Ascending aorta (tissue), 2 donors: ENCODE measurements at regions of chr20 and their contacts with region 1.

Region 1: GRCh38 chr20:12394786-12395185 is 477.1 kb downstream of the BTBD3 start:
- DNase-seq: no peak
- H3K4me3 ChIP-seq: no peak overlapping the region
- H3K27ac ChIP-seq: no peak overlapping the region
- H3K4me1 ChIP-seq: no peaks in the 10 kb centered on the region
- H3K27me3 ChIP-seq: no peaks in the 10 kb centered on the region
- CTCF ChIP-seq: no peak

Region 2: GRCh38 chr20:12318043-12318442 is 76.7 kb before region 1 on chr20:
- intact Hi-C with region 1: no loop called
- DNase-seq: no peak
- H3K4me3 ChIP-seq: no peak overlapping the region
- H3K27ac ChIP-seq: no peak overlapping the region
- H3K4me1 ChIP-seq: no peaks in the 10 kb centered on the region
- H3K27me3 ChIP-seq: no peaks in the 10 kb centered on the region
- CTCF ChIP-seq: no peak

Region 3: DNA sequence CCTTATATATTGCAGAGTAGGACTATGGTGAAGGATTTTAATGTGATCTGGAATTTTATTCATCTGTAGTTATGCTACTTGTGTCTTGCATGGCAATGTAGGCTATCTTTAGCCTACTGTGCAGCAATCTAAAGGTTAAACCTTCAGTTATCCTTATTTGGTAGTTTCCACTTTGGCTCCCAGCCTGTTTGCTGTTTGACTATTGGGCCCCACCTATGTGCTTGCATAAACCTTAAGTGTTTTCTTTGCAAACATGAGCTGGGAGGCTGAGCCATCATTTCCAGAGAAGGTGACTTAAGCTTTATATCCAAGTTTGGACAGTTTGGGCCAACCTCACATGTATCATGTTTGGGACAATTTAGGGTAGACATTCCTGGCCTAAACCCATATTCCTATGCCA is 60.4 kb after region 1 on chr20:
- intact Hi-C with region 1: loop called (anchors 10 kb)
- DNase-seq: no peak
- H3K4me3 ChIP-seq: no peak overlapping the region
- H3K27ac ChIP-seq: no peak overlapping the region
- H3K4me1 ChIP-seq: no peaks in the 10 kb centered on the region
- H3K27me3 ChIP-seq: no peaks in the 10 kb centered on the region
- CTCF ChIP-seq: no peak